CD8-positive, alpha-beta T cell (primary cell): ENCODE measurements at regions of chr7 and their contacts with region 1.

Region 1: DNA sequence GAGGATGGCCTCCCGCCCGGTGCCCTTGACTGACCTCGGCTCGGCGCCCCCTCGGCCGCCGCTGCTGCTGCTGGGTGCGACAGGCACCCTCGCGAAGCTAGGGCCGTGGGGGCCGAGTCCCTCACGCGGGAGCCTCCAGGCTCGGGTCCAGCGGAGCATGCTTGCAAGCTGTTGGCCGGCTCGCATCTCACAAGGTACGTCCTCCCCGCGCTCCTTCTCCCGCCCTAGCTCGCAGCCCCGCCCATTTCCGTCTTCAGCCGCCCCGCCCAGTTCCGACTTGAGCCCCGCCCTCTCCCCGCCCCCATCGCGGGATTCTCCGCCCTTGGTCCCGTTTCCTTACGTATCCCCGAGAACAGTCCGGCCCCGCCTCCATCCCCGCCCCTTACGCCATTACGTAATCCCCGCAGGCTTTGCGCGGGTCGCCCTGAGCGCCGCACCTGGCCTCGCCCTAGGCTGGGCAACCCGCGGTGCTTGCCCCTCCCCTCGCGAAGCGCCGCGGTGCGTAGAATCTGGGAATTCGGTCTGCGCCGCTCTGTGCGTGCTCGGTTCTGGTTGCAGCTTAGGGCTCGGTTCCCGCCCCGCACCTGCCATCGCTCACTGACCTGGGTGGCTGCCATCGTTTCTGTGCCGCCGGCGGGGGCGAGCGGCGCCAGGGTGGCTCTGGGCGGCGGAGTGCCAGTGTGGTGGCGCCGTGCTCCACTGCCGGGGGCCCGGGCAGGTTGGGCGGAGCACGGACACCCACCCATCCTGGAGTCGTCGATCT is at the start of gene ABHD11:
- DNase-seq: peak; percentile 96 to 100 (median 99)
- ATAC-seq: peak; percentile 87
- H3K4me3 ChIP-seq: peak within 1 kb of the TSS; percentile 76 to 92
- H3K4me3 Mint-ChIP-seq: peak within 1 kb of the TSS; percentile 88
- H3K27ac ChIP-seq: peak within 1 kb of the TSS; percentile 74 to 81
- H3K27ac Mint-ChIP-seq: peak within 1 kb of the TSS; percentile 93
- H3K4me1 ChIP-seq: peaks cover 17% of the 10 kb centered on the region
- H3K4me1 Mint-ChIP-seq: peaks cover 13% of the 10 kb centered on the region
- H3K27me3 ChIP-seq: no peaks in the 10 kb centered on the region
- H3K27me3 Mint-ChIP-seq: no peaks in the 10 kb centered on the region
- CTCF ChIP-seq: no peak
- total RNA-seq, gene ABHD11: 12.2 to 12.3 TPM

Region 2: GRCh38 chr7:72924733-72925545 is 813.9 kb before region 1 on chr7 and contains the start of gene POM121:
- CTCF ChIA-PET with region 1: no interaction called
- POLR2A ChIA-PET with region 1: no interaction called
- intact Hi-C with region 1: no loop called
- DNase-seq: peak; percentile 65 to 94 (median 82)
- ATAC-seq: peak; percentile 92
- H3K4me3 ChIP-seq: peak within 1 kb of the TSS; percentile 78 to 88
- H3K4me3 Mint-ChIP-seq: peak within 1 kb of the TSS; percentile 99
- H3K27ac ChIP-seq: peak within 1 kb of the TSS; percentile 92 to 94
- H3K27ac Mint-ChIP-seq: peak within 1 kb of the TSS; percentile 100
- H3K4me1 ChIP-seq: peaks cover 19% of the 10 kb centered on the region
- H3K4me1 Mint-ChIP-seq: peaks cover 41% of the 10 kb centered on the region
- H3K27me3 ChIP-seq: no peaks in the 10 kb centered on the region
- H3K27me3 Mint-ChIP-seq: no peaks in the 10 kb centered on the region
- CTCF ChIP-seq: no peak
- total RNA-seq, gene POM121: 79.4 to 83.6 TPM

Region 3: DNA sequence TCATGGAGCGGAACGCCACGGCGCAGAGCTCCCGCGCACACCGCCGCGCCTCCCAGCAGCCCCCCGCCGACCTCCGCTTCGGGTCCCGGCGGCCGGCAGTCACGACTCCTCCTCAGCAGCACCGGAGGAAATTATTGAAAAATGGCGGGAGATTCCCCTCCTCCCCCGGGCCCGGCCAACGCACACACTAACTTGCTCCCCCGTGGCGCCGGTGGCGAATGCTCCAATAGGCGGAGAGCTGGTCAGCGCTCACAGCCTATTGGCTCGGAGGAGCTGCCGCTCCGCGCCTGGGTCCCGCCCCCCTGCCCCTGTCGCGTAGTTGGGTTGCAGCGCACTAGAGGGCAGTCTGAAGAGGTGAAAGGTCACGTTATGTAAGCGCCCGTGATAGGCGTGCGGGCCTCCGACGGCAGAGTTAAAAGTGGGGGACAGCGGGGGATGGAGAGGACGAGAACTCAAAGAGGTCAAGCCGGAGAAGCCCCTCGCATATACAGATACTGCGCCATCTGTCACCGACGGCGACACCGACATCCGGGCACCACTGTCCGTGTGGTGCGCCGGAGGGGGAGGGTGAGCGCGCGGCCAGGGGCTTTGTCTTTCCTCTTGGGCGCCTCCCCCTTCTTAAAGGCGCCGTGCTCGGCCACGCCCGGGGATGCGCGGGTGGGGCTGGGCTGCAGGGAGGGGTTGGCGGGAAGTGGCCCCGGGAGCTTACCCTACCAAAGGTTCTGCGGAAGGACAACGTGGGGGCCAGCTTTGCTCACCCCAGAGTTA is 216.5 kb before region 1 on chr7 and contains the start of gene BAZ1B:
- CTCF ChIA-PET with region 1: no interaction called
- POLR2A ChIA-PET with region 1: interaction called, 3 read pairs
- intact Hi-C with region 1: loop called (anchors 1 kb)
- DNase-seq: peak; percentile 92 to 98 (median 96)
- ATAC-seq: peak; percentile 93
- H3K4me3 ChIP-seq: peak within 1 kb of the TSS; percentile 65 to 87
- H3K4me3 Mint-ChIP-seq: peak within 1 kb of the TSS; percentile 93
- H3K27ac ChIP-seq: peak within 1 kb of the TSS; percentile 90 to 92
- H3K27ac Mint-ChIP-seq: peak within 1 kb of the TSS; percentile 96
- H3K4me1 ChIP-seq: peaks cover 59% of the 10 kb centered on the region
- H3K4me1 Mint-ChIP-seq: peaks cover 66% of the 10 kb centered on the region
- H3K27me3 ChIP-seq: no peaks in the 10 kb centered on the region
- H3K27me3 Mint-ChIP-seq: no peaks in the 10 kb centered on the region
- CTCF ChIP-seq: no peak
- total RNA-seq, gene BAZ1B: 32.2 to 37.2 TPM

Region 4: GRCh38 chr7:73606801-73607691 is 131.7 kb before region 1 on chr7:
- CTCF ChIA-PET with region 1: interaction called, 132 read pairs
- POLR2A ChIA-PET with region 1: interaction called, 6 read pairs
- intact Hi-C with region 1: loop called (anchors 1 kb)
- DNase-seq: peak; percentile 37 to 82 (median 70)
- ATAC-seq: peak; percentile 85
- H3K4me3 ChIP-seq: no peak overlapping the region
- H3K4me3 Mint-ChIP-seq: no peak overlapping the region
- H3K27ac ChIP-seq: no peak overlapping the region
- H3K27ac Mint-ChIP-seq: no peak overlapping the region
- H3K4me1 ChIP-seq: peaks cover 7% of the 10 kb centered on the region
- H3K4me1 Mint-ChIP-seq: no peaks in the 10 kb centered on the region
- H3K27me3 ChIP-seq: peaks cover 0 to 8% of the 10 kb centered on the region in 2 experiments
- H3K27me3 Mint-ChIP-seq: peaks cover 22% of the 10 kb centered on the region
- CTCF ChIP-seq: peak; percentile 87

Region 5: GRCh38 chr7:73701357-73701995 is 37.3 kb before region 1 on chr7:
- CTCF ChIA-PET with region 1: no interaction called
- POLR2A ChIA-PET with region 1: no interaction called
- intact Hi-C with region 1: no loop called
- DNase-seq: peak in 4 of 9 experiments; percentile 29 to 53 (median 37)
- ATAC-seq: peak; percentile 43
- H3K4me3 ChIP-seq: no peak overlapping the region
- H3K4me3 Mint-ChIP-seq: no peak overlapping the region
- H3K27ac ChIP-seq: no peak overlapping the region
- H3K27ac Mint-ChIP-seq: no peak overlapping the region
- H3K4me1 ChIP-seq: peaks cover 4% of the 10 kb centered on the region
- H3K4me1 Mint-ChIP-seq: peaks cover 3% of the 10 kb centered on the region
- H3K27me3 ChIP-seq: no peaks in the 10 kb centered on the region
- H3K27me3 Mint-ChIP-seq: no peaks in the 10 kb centered on the region
- CTCF ChIP-seq: peak; percentile 41

Region 6: DNA sequence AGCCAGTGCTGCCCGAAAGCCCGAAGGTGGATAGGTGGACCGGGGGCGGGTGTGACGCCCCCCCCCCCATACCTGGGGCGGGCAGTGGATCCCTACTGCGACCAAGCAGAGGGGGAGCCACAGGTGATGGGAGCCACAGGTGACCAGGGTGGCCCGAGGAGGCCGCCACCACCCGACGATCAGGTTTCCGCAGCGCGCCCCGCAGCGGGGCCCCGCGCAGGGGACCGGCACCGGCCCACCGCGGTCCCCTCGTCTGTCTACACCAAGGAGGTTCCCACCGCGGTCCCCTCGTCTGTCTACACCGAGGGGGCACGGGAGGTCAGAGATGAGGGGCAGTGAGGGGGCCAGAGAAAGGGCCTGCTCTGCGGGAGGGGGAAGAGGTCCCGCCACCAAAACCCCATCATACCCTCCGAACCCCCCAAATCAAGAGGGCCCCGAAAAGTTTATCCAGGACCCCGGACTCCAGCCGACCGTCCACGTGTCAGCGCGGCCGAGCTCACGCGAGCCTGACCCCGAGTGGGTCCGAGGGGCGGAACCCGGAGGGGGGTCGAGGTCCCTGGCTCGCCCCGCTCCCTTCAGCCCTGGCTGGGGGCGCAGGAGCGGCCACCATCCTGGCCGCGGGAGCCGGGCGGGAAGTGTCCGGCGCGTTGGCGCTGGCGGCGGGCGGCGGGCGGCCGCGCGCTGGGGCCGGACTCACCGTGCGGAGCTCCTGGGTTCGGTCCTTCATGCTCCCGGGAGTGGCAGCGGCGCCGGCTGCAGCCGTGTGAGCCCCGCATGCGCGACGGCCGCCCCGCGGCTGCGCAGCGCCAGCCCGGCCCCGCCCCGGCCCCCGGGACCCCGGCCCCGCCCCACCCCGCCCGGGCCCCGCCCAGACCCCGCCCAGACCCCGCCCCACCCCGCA is 19.6 kb before region 1 on chr7 and contains the start of gene STX1A:
- CTCF ChIA-PET with region 1: interaction called, 7 read pairs
- POLR2A ChIA-PET with region 1: interaction called, 3 read pairs
- intact Hi-C with region 1: loop called (anchors 1 kb)
- DNase-seq: peak; percentile 28 to 86 (median 69)
- ATAC-seq: peak; percentile 76
- H3K4me3 ChIP-seq: peak within 1 kb of the TSS; percentile 73 to 79
- H3K4me3 Mint-ChIP-seq: peak within 1 kb of the TSS; percentile 87
- H3K27ac ChIP-seq: no peak within 1 kb of the TSS
- H3K27ac Mint-ChIP-seq: no peak within 1 kb of the TSS
- H3K4me1 ChIP-seq: peaks cover 28% of the 10 kb centered on the region
- H3K4me1 Mint-ChIP-seq: peaks cover 22% of the 10 kb centered on the region
- H3K27me3 ChIP-seq: no peaks in the 10 kb centered on the region
- H3K27me3 Mint-ChIP-seq: no peaks in the 10 kb centered on the region
- CTCF ChIP-seq: no peak
- total RNA-seq, gene STX1A: 18.2 to 20.8 TPM

Region 7: GRCh38 chr7:73786588-73786987 is 47.8 kb after region 1 on chr7:
- CTCF ChIA-PET with region 1: no interaction called
- POLR2A ChIA-PET with region 1: no interaction called
- intact Hi-C with region 1: no loop called
- DNase-seq: no peak
- ATAC-seq: no peak
- H3K4me3 ChIP-seq: no peak overlapping the region
- H3K4me3 Mint-ChIP-seq: no peak overlapping the region
- H3K27ac ChIP-seq: no peak overlapping the region
- H3K27ac Mint-ChIP-seq: no peak overlapping the region
- H3K4me1 ChIP-seq: no peaks in the 10 kb centered on the region
- H3K4me1 Mint-ChIP-seq: no peaks in the 10 kb centered on the region
- H3K27me3 ChIP-seq: no peaks in the 10 kb centered on the region
- H3K27me3 Mint-ChIP-seq: peaks cover 3% of the 10 kb centered on the region
- CTCF ChIP-seq: no peak

Region 8: DNA sequence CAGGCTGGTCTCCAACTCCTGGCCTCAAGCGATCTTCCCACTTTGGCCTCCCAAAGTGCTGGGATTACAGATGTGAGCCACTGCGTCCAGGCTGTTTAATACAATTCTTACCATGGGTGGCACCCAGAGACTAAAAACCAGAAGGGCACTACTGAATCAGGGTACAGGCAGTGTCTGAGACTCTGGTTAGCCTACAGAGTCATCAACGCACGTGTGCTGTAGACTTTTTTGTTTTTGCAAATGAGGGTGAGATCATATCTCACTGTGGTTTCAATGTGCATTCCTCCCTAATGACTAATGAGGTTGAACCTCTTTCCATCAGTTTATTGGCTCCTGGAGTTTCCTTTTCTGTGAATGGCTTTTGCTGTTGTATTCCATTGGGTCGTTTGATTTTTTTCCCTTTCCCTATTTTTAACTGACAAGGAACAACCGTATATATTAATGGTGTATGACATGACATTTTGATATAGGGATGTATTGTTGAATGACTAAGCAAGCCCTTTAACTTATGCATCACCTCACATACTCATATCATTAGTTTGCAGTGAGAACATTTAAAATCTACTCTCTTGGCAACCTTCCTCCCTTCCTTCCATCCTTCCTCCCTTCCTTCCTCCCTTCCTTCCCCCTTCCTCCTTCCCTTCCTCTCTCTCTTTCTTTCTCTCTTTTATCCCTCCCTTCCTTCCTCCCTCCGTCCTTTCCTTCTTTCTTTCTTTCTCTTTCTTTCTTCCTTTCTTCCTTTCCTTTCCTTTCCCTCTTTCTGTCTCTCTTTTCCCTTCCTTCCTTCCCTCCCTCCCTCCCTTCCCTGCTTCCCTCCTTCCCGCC is 112.8 kb after region 1 on chr7:
- CTCF ChIA-PET with region 1: interaction called, 9 read pairs
- POLR2A ChIA-PET with region 1: no interaction called
- intact Hi-C with region 1: loop called (anchors 2 kb)
- DNase-seq: peak in 3 of 9 experiments; percentile 24 to 34 (median 27)
- ATAC-seq: peak; percentile 65
- H3K4me3 ChIP-seq: no peak overlapping the region
- H3K4me3 Mint-ChIP-seq: no peak overlapping the region
- H3K27ac ChIP-seq: no peak overlapping the region
- H3K27ac Mint-ChIP-seq: no peak overlapping the region
- H3K4me1 ChIP-seq: no peaks in the 10 kb centered on the region
- H3K4me1 Mint-ChIP-seq: peaks cover 8% of the 10 kb centered on the region
- H3K27me3 ChIP-seq: peaks cover 0 to 3% of the 10 kb centered on the region in 2 experiments
- H3K27me3 Mint-ChIP-seq: peaks cover 16% of the 10 kb centered on the region
- CTCF ChIP-seq: no peak

Region 9: GRCh38 chr7:74371381-74372341 is 632.9 kb after region 1 on chr7:
- CTCF ChIA-PET with region 1: no interaction called
- POLR2A ChIA-PET with region 1: no interaction called
- intact Hi-C with region 1: no loop called
- DNase-seq: no peak
- ATAC-seq: no peak
- H3K4me3 ChIP-seq: no peak overlapping the region
- H3K4me3 Mint-ChIP-seq: no peak overlapping the region
- H3K27ac ChIP-seq: no peak overlapping the region
- H3K27ac Mint-ChIP-seq: no peak overlapping the region
- H3K4me1 ChIP-seq: no peaks in the 10 kb centered on the region
- H3K4me1 Mint-ChIP-seq: peaks cover 3% of the 10 kb centered on the region
- H3K27me3 ChIP-seq: no peaks in the 10 kb centered on the region
- H3K27me3 Mint-ChIP-seq: no peaks in the 10 kb centered on the region
- CTCF ChIP-seq: no peak